Head of caudate nucleus (tissue), 42 donors: ENCODE measurements at regions of chr20 and their contacts with region 1.

Region 1: DNA sequence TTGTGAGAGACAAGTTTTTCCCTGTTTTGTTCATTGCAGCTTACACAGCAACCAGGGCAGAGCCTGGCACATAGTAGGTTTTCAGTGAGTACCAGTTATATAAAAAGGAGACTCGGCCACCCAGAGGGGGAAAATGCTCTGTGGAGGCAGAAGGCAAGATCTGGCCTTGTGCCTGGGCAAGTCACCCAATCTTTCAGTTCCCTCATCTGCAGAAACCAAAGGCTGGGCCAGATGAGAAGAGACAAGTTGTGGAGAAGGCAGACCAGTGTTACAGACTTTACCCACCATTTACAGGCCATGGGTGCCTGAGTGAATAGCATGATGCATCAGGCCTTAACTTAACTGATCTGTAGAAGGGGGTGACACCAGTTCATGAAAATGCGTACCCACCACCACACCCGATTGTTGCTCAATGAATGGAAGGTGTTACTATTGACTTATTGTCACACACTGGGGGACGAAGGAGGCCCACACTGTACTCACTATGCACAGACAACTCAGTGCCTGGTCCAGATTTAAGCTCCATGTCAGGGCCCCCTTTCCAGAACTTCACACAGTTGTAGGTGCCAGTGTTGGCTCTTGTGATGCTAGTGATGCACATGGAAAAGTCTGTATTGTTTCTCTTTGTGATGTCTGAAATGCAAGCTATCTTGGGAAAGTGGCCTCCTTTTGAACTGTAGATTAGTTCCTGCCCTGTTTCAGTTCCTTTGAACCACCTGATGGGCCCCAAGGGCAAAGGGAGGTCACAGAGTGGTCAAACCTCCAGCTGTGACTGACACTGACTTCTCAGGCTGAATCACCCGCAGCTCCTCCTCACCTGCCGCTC is 64.3 kb upstream of the SIRPG start:
- DNase-seq: no peak

Region 2: GRCh38 chr20:1663917-1664316 is 58.0 kb before region 1 on chr20:
- intact Hi-C with region 1: loop called (anchors 10 kb)
- DNase-seq: no peak

Region 3: GRCh38 chr20:1764136-1765033 is 42.5 kb after region 1 on chr20:
- intact Hi-C with region 1: no loop called
- DNase-seq: peak; percentile 69 to 94 (median 85)